MCF 10A (cell line): ENCODE measurements at regions of chr10 and their contacts with region 1.

Region 1: GRCh38 chr10:11986593-11987216 is 55.9 kb downstream of the UPF2 start:
- DNase-seq: peak; percentile 85
- H3K4me3 Mint-ChIP-seq: no peak overlapping the region
- H3K27ac Mint-ChIP-seq: no peak overlapping the region
- H3K4me1 Mint-ChIP-seq: no peaks in the 10 kb centered on the region
- H3K27me3 Mint-ChIP-seq: no peaks in the 10 kb centered on the region
- CTCF ChIP-seq: peak; percentile 92

Region 2: DNA sequence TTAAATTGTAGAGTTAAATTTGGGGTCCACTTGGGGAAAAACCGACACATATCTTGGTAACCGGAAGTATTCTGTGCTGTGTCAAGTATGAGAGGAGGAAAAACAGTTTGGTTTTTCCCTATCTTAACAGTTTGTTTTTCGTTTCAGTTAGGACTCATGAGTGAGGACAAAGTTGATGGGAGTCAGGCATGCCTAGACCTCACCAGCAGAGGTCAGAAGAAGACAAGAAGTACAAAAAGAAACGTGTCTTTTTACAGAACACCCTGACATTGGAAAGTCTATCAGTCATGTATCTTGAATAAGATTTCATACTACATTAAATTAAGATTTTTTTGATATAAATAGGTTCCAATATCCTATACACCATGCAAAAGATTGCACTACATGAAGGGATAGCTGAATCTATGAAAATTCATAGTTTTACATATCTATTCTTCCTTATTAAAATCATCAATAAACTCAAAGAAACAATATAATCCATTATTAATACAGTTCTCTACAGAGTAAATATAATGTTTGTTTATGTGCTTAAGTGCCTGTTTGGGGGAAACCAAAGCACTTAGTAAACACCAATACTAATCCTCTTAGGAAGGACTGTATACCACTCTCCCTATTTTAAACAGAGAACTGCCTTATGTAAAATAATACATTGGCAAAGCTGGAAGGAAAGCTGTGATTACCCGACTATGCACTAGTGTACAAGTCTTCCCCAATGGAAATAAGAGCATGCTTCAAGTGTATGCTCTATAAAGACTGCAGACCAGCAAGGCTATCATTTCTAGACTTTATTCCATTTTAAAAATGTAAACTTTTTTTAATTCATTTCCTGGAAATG is 470.9 kb before region 1 on chr10:
- CTCF ChIA-PET with region 1: interaction called, 3 read pairs
- POLR2A ChIA-PET with region 1: no interaction called
- intact Hi-C with region 1: loop called (anchors 10 kb)
- DNase-seq: peak; percentile 72
- H3K4me3 Mint-ChIP-seq: no peak overlapping the region
- H3K27ac Mint-ChIP-seq: no peak overlapping the region
- H3K4me1 Mint-ChIP-seq: no peaks in the 10 kb centered on the region
- H3K27me3 Mint-ChIP-seq: no peaks in the 10 kb centered on the region
- CTCF ChIP-seq: peak; percentile 77

Region 3: DNA sequence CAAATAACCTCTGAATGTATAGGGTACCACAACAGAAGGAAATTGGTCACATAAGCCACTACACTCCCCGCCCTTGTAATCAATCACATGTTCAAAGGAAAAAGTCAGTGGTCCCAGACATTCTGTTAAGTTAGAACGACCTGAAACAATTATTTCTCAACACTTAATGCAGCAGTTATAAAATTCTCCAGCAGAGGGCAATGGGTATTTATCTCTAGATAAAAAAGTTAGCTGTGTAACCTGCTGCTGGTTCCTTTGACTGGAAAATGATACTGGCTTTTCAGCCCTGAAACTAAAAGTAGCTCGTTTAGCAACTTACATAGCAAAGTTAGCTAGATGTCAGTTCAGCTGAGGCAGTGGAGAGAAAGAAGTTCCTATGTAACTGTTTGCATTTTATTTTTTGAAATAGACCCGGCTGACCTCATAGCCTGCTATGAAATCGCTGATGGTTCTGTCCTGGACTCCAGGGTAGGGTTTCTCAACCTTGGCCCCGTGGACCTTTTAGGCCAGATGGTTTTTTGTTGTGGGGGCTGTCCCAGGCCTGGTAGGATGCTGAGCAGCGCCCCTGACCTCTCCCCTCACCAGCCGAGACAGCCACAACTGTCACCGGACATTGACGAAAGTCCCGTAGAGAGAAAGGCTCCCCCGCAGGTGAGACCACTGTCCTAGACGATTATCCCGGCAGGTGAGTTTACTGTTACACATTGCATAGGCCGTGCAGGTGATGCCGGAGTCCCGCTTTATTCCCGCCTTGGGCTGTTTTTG is 203.7 kb before region 1 on chr10:
- CTCF ChIA-PET with region 1: interaction called, 53 read pairs
- POLR2A ChIA-PET with region 1: interaction called, 4 read pairs
- intact Hi-C with region 1: loop called (anchors 1 kb)
- DNase-seq: peak; percentile 73
- H3K4me3 Mint-ChIP-seq: no peak overlapping the region
- H3K27ac Mint-ChIP-seq: no peak overlapping the region
- H3K4me1 Mint-ChIP-seq: no peaks in the 10 kb centered on the region
- H3K27me3 Mint-ChIP-seq: no peaks in the 10 kb centered on the region
- CTCF ChIP-seq: peak; percentile 53

Region 4: GRCh38 chr10:11793762-11794479 is 192.8 kb before region 1 on chr10:
- CTCF ChIA-PET with region 1: interaction called, 35 read pairs
- POLR2A ChIA-PET with region 1: interaction called, 3 read pairs
- intact Hi-C with region 1: loop called (anchors 1 kb)
- DNase-seq: peak; percentile 55
- H3K4me3 Mint-ChIP-seq: no peak overlapping the region
- H3K27ac Mint-ChIP-seq: peak overlapping the region; percentile 21
- H3K4me1 Mint-ChIP-seq: peaks cover 17% of the 10 kb centered on the region
- H3K27me3 Mint-ChIP-seq: no peaks in the 10 kb centered on the region
- CTCF ChIP-seq: no peak

Region 5: GRCh38 chr10:11798845-11799735 is 187.6 kb before region 1 on chr10:
- CTCF ChIA-PET with region 1: interaction called, 35 read pairs
- POLR2A ChIA-PET with region 1: no interaction called
- intact Hi-C with region 1: no loop called
- DNase-seq: no peak
- H3K4me3 Mint-ChIP-seq: no peak overlapping the region
- H3K27ac Mint-ChIP-seq: no peak overlapping the region
- H3K4me1 Mint-ChIP-seq: no peaks in the 10 kb centered on the region
- H3K27me3 Mint-ChIP-seq: no peaks in the 10 kb centered on the region
- CTCF ChIP-seq: no peak

Region 6: DNA sequence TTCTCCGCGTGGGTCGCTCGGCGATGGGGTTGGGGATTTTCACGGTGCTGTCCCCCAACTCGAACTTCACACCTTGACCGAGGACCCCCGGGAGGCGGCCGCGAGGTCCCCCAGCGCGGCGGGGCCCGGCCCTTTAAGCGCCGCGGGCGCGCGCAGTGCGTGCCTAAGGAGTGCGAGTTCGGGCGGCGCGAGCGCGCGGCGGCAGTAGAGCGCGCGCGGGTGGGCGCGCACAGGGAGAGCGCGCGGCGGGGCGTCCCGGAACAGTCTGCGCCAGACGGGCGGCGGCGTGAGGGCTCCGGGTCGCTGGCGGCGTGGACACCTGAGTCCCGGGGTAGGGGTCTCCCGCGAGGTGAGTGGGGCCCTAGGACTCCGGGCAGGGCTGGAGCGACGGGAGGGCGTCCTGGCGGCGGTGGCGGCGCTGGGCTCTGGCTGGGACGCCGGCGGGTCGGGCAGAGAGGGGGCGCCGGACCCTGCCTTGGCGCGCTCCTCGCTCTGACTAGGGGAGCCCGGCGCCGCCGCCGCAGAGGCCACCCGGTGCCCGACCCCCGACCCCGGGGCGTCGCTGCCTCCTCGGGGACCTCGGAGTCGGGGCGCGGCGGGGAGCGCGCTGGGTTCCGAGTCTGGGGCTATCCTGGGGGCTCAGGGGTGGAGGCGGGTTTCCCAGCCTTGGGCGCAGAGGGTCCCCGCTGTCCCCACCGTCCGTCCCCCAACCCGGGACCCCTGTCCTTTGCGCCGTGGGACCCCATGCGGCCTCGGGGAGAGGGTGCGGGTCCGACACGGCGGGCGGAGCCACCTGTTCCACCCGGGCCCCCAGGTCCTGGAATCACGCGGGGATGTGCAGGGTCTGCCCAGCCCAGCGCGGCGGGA is 163.3 kb before region 1 on chr10 and contains the start of gene PROSER2:
- CTCF ChIA-PET with region 1: interaction called, 4 read pairs
- POLR2A ChIA-PET with region 1: no interaction called
- intact Hi-C with region 1: loop called (anchors 1 kb)
- DNase-seq: peak; percentile 74
- H3K4me3 Mint-ChIP-seq: peak within 1 kb of the TSS; percentile 93
- H3K27ac Mint-ChIP-seq: peak within 1 kb of the TSS; percentile 89
- H3K4me1 Mint-ChIP-seq: peaks cover 38% of the 10 kb centered on the region
- H3K27me3 Mint-ChIP-seq: no peaks in the 10 kb centered on the region
- CTCF ChIP-seq: no peak
- total RNA-seq, gene PROSER2: 29.2 and 58.0 TPM in 2 replicates